Mammary epithelial cell (primary cell): ENCODE measurements at regions of chr16 and their contacts with region 1.

Region 1: DNA sequence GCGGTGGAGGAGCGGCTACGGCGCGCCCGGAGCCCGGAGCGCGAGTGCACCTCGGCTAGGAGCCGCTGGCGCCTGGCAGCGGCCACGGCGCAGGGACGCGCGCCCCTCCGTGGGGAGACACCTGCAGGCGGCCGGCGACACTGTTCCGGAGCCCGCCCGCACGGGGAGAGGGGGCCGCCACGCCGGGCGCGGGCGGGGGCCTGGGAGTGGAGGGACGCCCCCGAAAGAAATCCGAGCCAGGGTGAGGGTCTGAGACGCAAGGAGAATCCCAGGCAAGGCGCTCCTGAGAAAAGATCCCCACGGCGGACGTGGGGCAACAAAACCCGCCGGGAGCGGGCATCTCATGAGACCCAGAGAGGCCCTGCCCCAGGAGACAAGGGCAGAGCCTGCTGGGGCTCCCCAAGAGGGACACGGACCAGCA is at the start of gene GSG1L:
- DNase-seq: no peak
- H3K4me3 ChIP-seq: no peak within 1 kb of the TSS
- H3K27ac ChIP-seq: no peak within 1 kb of the TSS
- H3K4me1 ChIP-seq: no peaks in the 10 kb centered on the region
- H3K27me3 ChIP-seq: peaks cover 31% of the 10 kb centered on the region
- CTCF ChIP-seq: no peak
- total RNA-seq, gene GSG1L: not detected

Region 2: GRCh38 chr16:27690608-27691007 is 373.0 kb before region 1 on chr16:
- CTCF ChIA-PET with region 1: no interaction called
- dilution Hi-C with region 1: no loop called
- in situ Hi-C with region 1: no loop called
- intact Hi-C with region 1: loop called (anchors 2 kb)
- DNase-seq: no peak
- H3K4me3 ChIP-seq: no peak overlapping the region
- H3K27ac ChIP-seq: no peak overlapping the region
- H3K4me1 ChIP-seq: no peaks in the 10 kb centered on the region
- H3K27me3 ChIP-seq: no peaks in the 10 kb centered on the region
- CTCF ChIP-seq: peak; percentile 30 to 45

Region 3: DNA sequence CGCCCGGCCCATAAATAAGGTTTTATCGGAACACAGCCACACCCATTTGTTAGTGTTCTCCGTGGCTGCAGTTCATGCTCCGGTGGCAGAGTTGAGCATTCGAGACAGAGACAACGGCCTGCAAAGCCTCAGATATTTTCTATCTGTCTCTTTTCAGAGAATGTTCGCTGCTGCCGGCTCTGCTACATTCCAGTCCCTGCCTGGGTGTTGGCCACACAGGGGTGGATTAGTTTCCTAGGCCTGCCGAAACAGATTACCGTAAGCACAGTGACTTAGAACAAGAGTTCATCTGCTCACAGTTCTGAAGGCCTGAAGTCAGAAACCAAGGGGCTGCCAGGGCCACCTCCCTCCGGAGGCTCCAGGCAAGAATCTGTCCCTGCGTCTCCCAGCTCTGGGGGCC is 19.0 kb after region 1 on chr16:
- CTCF ChIA-PET with region 1: no interaction called
- dilution Hi-C with region 1: no loop called
- in situ Hi-C with region 1: no loop called
- intact Hi-C with region 1: no loop called
- DNase-seq: peak; percentile 17
- H3K4me3 ChIP-seq: no peak overlapping the region
- H3K27ac ChIP-seq: no peak overlapping the region
- H3K4me1 ChIP-seq: peaks cover 4% of the 10 kb centered on the region
- H3K27me3 ChIP-seq: no peaks in the 10 kb centered on the region
- CTCF ChIP-seq: no peak